Astrocyte of the cerebellum (primary cell): ENCODE measurements at regions of chr11 and their contacts with region 1.

Region 1: GRCh38 chr11:34204396-34205279 is 99.2 kb downstream of the NAT10 start:
- DNase-seq: no peak
- H3K4me3 ChIP-seq: no peak overlapping the region
- CTCF ChIP-seq: no peak

Region 2: GRCh38 chr11:34105079-34105956 is 99.3 kb before region 1 on chr11 and contains the start of gene NAT10:
- in situ Hi-C with region 1: no loop called
- DNase-seq: peak; percentile 98
- H3K4me3 ChIP-seq: peak within 1 kb of the TSS; percentile 88
- CTCF ChIP-seq: peak; percentile 7

Region 3: GRCh38 chr11:34234086-34234740 is 29.6 kb after region 1 on chr11:
- in situ Hi-C with region 1: no loop called
- DNase-seq: no peak
- H3K4me3 ChIP-seq: no peak overlapping the region
- CTCF ChIP-seq: no peak

Region 4: GRCh38 chr11:34250732-34251639 is 46.3 kb after region 1 on chr11:
- in situ Hi-C with region 1: loop called (anchors 5 kb)
- DNase-seq: no peak
- H3K4me3 ChIP-seq: peak overlapping the region; percentile 22
- CTCF ChIP-seq: no peak

Region 5: GRCh38 chr11:34565417-34566207 is 361.0 kb after region 1 on chr11:
- in situ Hi-C with region 1: no loop called
- DNase-seq: no peak
- H3K4me3 ChIP-seq: no peak overlapping the region
- CTCF ChIP-seq: peak; percentile 30